AG04450 (cell line): ENCODE measurements at regions of chr11 and their contacts with region 1.

Region 1: GRCh38 chr11:17116121-17116520 is 38.7 kb upstream of the RPS13 start:
- DNase-seq: no peak
- H3K4me3 ChIP-seq: no peak overlapping the region
- H3K27ac ChIP-seq: no peak overlapping the region
- H3K27me3 ChIP-seq: no peaks in the 10 kb centered on the region
- CTCF ChIP-seq: no peak

Region 2: DNA sequence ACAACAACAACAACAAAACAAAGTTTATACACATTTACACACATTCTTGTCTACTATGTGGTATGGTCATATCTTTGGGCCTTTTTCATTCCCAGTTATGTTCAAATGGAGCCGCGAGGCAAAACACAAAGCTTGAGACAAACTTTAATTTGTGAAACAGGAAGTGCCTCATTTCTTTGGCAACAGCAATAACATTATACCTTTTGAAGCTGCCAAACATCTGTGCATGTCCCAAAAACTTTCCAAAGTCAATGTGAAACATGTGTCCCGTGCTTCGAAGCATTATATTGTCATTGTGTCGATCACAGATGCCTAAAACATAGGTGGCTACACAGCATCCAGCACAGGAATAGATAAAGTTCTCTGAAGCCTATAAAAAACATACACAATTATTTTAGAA is 13.7 kb before region 1 on chr11:
- CTCF ChIA-PET with region 1: interaction called, 10 read pairs
- POLR2A ChIA-PET with region 1: no interaction called
- DNase-seq: no peak
- H3K4me3 ChIP-seq: no peak overlapping the region
- H3K27ac ChIP-seq: no peak overlapping the region
- H3K27me3 ChIP-seq: no peaks in the 10 kb centered on the region
- CTCF ChIP-seq: no peak

Region 3: GRCh38 chr11:17267561-17267960 is 151.4 kb after region 1 on chr11:
- CTCF ChIA-PET with region 1: no interaction called
- POLR2A ChIA-PET with region 1: no interaction called
- DNase-seq: no peak
- H3K4me3 ChIP-seq: no peak overlapping the region
- H3K27ac ChIP-seq: no peak overlapping the region
- H3K27me3 ChIP-seq: no peaks in the 10 kb centered on the region
- CTCF ChIP-seq: no peak